ENCODE measurements at regions of chr12 and their contacts with region 1.

Region 1: DNA sequence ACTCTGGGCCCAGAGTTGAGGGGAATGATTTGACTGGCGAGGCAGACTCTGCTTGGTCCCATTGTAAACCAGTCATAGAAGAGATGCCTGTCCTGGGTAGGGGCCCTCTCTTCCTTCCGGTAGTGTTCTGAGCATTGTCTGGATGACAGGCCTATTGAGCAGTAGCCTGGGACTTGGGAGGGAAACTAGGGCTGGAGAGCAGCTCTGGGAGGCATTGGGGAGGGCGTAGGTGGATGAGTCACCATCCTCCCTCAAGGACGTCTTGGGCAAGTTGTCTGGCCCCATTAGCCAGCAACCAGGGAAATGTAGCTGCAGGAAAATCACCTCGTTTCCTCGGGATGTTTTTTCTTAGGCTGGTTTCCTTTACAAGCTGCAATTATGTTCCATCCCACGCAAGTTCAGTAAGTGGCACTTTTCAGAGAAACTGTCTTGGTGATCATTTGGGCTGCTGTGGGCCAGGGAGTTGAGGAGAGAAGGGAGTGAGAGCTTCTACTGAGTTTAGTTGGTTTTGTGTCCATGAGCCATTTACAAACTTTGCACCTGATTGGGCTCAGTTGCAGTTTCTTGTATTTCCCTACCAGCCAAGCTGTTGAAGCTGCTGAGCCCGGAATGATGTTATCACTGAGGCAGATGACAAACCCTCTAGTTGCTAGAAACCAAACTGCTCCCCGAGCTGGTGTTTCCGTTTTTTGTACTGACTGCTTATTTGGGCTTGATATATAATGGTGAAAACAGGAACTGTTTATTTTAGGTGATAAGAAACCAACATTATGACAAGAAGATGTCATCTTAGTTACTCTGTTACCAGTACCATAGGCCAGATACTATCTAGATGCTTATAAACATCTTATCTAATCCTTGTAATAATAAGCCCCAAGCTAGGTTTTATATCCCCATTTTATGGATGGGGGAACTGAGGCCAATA is 147.6 kb downstream of the CHST11 start:
- DNase-seq: peak; percentile 86
- ATAC-seq: peak; percentile 90
- H3K4me3 ChIP-seq: no peak overlapping the region
- H3K27ac ChIP-seq: peak overlapping the region; percentile 87
- H3K4me1 ChIP-seq: peaks cover 34% of the 10 kb centered on the region
- H3K27me3 ChIP-seq: no peaks in the 10 kb centered on the region
- CTCF ChIP-seq: 0 out of 6 replicates have a peak, but pooled peaks of 1 of the 3 experiments have one; percentile 4
- EP300 ChIP-seq: peak; percentile 36 to 60; a peak in 1 of 4 replicates
- POLR2A ChIP-seq: no peak
- RAD21 ChIP-seq: peak; percentile 32

Region 2: DNA sequence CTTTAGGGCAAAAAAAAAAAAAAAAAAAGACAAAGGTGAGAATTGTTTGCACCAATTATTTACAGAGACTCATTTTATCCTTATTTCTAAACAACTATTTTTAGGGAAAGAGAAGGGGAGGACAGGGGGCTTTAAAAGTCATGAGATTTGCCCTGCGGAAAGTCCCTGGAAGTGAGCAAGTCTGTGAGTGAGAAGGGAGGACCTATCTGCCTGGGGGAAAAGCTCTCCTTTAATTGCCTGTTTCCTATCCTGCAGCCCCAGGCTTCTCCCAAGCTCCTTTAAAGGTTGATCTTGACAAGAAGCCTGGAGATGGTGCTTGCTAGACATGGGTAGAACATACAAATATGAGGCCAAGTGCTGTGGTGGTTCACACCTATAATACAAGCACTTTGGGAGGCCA is 155.9 kb before region 1 on chr12:
- CTCF ChIA-PET with region 1: no interaction called
- POLR2A ChIA-PET with region 1: no interaction called
- RAD21 ChIA-PET with region 1: no interaction called
- SMC1A ChIA-PET with region 1: no interaction called
- in situ Hi-C with region 1: no loop called
- intact Hi-C with region 1: no loop called
- DNase-seq: no peak
- ATAC-seq: no peak
- H3K4me3 ChIP-seq: no peak overlapping the region
- H3K27ac ChIP-seq: no peak overlapping the region
- H3K4me1 ChIP-seq: no peaks in the 10 kb centered on the region
- H3K27me3 ChIP-seq: no peaks in the 10 kb centered on the region
- CTCF ChIP-seq: no peak
- EP300 ChIP-seq: no peak
- POLR2A ChIP-seq: no peak
- RAD21 ChIP-seq: no peak

Region 3: GRCh38 chr12:104626069-104626837 is 21.9 kb after region 1 on chr12:
- CTCF ChIA-PET with region 1: interaction called, 3 read pairs
- POLR2A ChIA-PET with region 1: no interaction called
- RAD21 ChIA-PET with region 1: interaction called, 3 read pairs
- SMC1A ChIA-PET with region 1: interaction called, 10 read pairs
- in situ Hi-C with region 1: no loop called
- intact Hi-C with region 1: no loop called
- DNase-seq: no peak
- ATAC-seq: no peak
- H3K4me3 ChIP-seq: no peak overlapping the region
- H3K27ac ChIP-seq: no peak overlapping the region; the same call in 1 of the 2 replicates
- H3K4me1 ChIP-seq: no peaks in the 10 kb centered on the region
- H3K27me3 ChIP-seq: no peaks in the 10 kb centered on the region
- CTCF ChIP-seq: no peak
- EP300 ChIP-seq: no peak
- POLR2A ChIP-seq: no peak
- RAD21 ChIP-seq: no peak

Region 4: GRCh38 chr12:104641862-104642261 is 37.5 kb after region 1 on chr12:
- CTCF ChIA-PET with region 1: interaction called, 4 read pairs
- POLR2A ChIA-PET with region 1: no interaction called
- RAD21 ChIA-PET with region 1: interaction called, 4 read pairs
- SMC1A ChIA-PET with region 1: interaction called, 6 read pairs
- in situ Hi-C with region 1: no loop called
- intact Hi-C with region 1: loop called (anchors 2 kb)
- DNase-seq: peak; percentile 79
- ATAC-seq: peak; percentile 92
- H3K4me3 ChIP-seq: no peak overlapping the region
- H3K27ac ChIP-seq: peak overlapping the region; percentile 78
- H3K4me1 ChIP-seq: peaks cover 43% of the 10 kb centered on the region
- H3K27me3 ChIP-seq: no peaks in the 10 kb centered on the region
- CTCF ChIP-seq: peak; percentile 37 to 65 (median 50); a peak in 5 of 6 replicates
- EP300 ChIP-seq: peak; percentile 99
- POLR2A ChIP-seq: no peak
- RAD21 ChIP-seq: peak; percentile 65

Region 5: DNA sequence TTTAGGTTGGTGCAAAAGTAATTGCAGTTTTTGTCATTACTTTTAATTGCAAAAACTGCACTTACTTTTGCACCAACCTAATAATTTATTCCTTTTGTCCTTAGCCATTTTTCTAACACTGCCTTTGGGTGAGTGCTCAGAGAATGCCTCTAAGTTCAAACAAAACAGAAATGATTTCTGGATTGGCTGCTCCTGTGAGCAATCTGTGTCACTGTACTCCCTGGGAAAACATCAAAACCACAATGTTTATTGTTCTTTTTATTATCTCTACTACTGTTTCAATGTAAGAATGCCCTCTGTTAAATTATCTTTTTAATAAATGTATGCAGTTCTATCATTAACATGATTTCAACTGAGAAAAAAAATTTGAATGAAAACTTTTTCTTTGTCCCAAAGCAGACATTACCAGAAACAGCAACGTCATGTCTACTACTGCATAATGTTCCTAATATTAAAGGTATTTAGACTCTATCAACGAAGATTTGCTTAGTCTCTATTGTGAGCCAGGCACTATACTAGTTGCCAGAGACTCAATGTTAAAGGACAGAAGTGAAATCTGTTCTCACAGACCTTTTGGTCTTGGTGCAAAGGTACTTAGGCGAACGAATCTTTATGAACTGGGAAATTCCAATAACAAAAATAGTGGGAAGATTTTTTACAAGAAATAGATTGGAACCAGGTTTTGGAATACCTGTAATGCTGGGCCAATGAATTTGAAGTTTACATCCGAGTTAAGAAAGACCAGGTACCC is 347.6 kb after region 1 on chr12:
- CTCF ChIA-PET with region 1: no interaction called
- POLR2A ChIA-PET with region 1: no interaction called
- RAD21 ChIA-PET with region 1: no interaction called
- SMC1A ChIA-PET with region 1: no interaction called
- in situ Hi-C with region 1: no loop called
- intact Hi-C with region 1: no loop called
- DNase-seq: no peak
- ATAC-seq: no peak
- H3K4me3 ChIP-seq: no peak overlapping the region
- H3K27ac ChIP-seq: no peak overlapping the region
- H3K4me1 ChIP-seq: no peaks in the 10 kb centered on the region
- H3K27me3 ChIP-seq: no peaks in the 10 kb centered on the region
- CTCF ChIP-seq: no peak
- EP300 ChIP-seq: no peak
- POLR2A ChIP-seq: no peak
- RAD21 ChIP-seq: no peak